ENCODE measurements at regions of chr5 and their contacts with region 1.

Region 1: GRCh38 chr5:87412630-87413342 is at the start of gene CCNH:
- DNase-seq: peak; percentile 99
- H3K4me3 ChIP-seq: peak within 1 kb of the TSS; percentile 86 to 90
- H3K27ac ChIP-seq: peak within 1 kb of the TSS; percentile 98 to 99
- H3K4me1 ChIP-seq: peaks cover 0 to 28% (median 12%) of the 10 kb centered on the region in 4 donors
- H3K27me3 ChIP-seq: no peaks in the 10 kb centered on the region
- CTCF ChIP-seq: no peak

Region 2: GRCh38 chr5:87267574-87268125 is 145.1 kb before region 1 on chr5 and contains the start of gene RASA1:
- intact Hi-C with region 1: loop called (anchors 10 kb)
- DNase-seq: peak; percentile 92 to 96
- H3K4me3 ChIP-seq: peak within 1 kb of the TSS; percentile 79 to 80
- H3K27ac ChIP-seq: peak within 1 kb of the TSS; percentile 85 to 94
- H3K4me1 ChIP-seq: peaks cover 0 to 27% (median 10%) of the 10 kb centered on the region in 4 donors
- H3K27me3 ChIP-seq: no peaks in the 10 kb centered on the region
- CTCF ChIP-seq: no peak

Region 3: DNA sequence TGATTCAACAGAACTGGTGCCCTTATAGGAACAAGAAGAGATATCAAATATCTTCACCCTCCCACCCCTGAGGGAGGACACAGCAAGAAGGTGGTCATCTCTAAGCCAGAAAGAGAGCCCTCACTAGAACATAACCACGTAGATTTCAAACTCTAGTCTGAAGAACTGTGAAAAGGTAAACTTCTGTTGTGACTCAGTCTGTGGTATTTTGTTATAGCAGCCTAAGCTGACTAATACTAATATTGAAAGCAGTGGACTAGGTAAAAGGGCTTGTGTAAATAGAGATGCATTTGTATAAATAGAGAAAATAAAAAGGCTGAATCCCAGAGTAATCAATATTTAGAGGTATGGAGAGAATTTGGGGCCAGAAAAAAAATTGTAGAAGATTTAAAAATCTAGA is 157.6 kb after region 1 on chr5:
- intact Hi-C with region 1: no loop called
- DNase-seq: no peak
- H3K4me3 ChIP-seq: no peak overlapping the region
- H3K27ac ChIP-seq: no peak overlapping the region
- H3K4me1 ChIP-seq: no peaks in the 10 kb centered on the region
- H3K27me3 ChIP-seq: no peaks in the 10 kb centered on the region
- CTCF ChIP-seq: no peak

Measured in tibial artery (tissue), 4 donors.